Activated CD4-positive, alpha-beta T cell treated with anti-CD3 and anti-CD28 coated beads, Interleukin-2, amount 10 ng/mL, durations not matched to agents 7 days and 5 days (primary cell): ENCODE measurements at regions of chr6 and their contacts with region 1.

Region 1: DNA sequence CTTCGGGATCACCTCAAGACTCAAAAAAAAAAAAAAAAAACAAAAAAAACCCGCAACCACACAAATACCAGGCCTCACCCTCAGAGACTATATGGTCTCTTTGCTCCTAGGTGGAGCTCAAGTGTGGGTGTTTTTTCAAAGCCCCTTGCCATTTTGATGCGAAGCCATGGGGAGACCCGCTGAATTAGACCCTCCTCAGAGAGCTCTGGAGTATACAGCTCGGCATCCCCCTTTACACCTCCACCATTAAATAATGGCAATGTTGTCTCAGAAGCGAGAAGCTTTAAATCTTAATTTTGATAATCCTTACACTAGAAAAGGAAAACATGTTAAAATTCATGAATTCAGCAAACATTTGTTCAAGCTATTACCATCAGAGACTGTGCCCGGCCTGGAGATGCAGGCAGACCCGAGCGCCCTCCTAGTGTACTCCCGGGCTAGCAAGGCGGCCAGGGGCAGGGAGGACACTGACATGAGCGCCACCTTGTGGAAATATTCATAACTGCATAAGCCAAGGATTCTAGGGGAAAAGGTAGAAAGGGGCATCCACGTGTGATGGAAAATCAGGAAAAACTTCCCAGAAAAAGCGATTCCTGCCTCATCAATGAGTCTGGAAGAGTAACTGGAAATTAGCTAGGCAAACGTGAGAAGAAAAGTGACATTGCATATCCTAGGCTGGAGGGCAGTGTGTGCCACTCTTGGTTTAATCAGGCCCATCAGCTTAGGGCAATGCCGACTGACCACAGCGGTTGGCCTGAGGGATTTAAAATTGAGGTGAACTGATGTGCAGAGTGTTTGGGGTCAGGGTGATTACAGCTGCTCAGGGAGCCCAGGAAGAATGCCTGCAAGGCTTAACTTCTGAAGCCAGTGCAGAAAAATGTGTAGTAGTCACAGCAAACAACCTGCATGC is 72.5 kb downstream of the B3GAT2 start:
- DNase-seq: peak; percentile 70
- H3K4me3 Mint-ChIP-seq: no peak overlapping the region
- H3K27ac Mint-ChIP-seq: no peak overlapping the region
- H3K4me1 Mint-ChIP-seq: no peaks in the 10 kb centered on the region
- H3K27me3 Mint-ChIP-seq: peaks cover 4% of the 10 kb centered on the region

Region 2: DNA sequence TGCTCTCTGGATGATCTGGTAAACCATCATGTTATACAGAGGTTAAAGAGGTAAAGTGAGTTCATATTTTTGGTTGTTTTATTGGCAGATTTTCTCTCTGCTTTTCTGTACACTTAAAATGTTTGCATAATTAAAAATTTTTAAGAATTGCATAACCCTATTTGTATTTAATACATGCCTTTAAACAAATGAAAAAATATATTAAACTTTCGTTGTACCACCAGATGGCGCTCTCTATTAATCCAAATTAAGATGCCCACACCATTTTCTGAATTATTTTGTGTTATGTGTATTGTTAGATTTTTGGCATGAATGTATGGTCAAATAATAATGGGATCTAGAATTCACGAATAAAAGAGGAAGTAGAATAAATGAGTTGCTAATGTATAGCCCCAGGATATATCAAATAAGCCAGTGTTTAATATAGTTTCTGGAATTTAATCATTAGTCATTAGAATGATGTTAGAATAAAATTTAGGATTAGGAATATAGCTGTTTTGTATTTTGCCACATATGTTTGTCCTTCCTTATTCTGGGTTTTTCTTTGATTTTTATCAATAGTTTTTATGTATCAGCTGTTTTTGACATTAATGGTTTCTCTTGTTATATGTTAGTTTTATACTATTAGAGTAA is 177.7 kb before region 1 on chr6:
- CTCF ChIA-PET with region 1: interaction called, 14 read pairs
- POLR2A ChIA-PET with region 1: interaction called, 3 read pairs
- DNase-seq: peak; percentile 26
- H3K4me3 Mint-ChIP-seq: no peak overlapping the region
- H3K27ac Mint-ChIP-seq: no peak overlapping the region
- H3K4me1 Mint-ChIP-seq: peaks cover 19% of the 10 kb centered on the region
- H3K27me3 Mint-ChIP-seq: no peaks in the 10 kb centered on the region

Region 3: DNA sequence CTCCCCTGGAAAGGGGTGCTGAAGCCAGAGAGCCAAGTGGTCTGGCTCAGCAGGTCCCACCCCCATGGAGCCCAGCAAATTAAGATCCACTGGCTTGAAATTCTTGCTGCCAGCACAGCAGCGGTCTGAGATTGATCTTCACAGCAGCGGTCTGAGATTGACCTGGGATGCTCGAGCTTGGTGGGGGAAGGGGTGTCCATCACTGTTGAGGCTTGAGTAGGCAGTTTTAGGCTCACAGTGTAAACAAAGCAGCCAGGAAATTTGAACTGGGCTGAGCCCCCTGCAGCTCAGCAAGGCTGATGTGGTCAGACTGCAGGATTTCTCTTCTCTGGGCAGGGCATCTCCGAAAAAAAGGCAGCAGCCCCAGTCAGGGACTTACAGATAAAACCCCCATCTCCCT is 113.8 kb after region 1 on chr6:
- CTCF ChIA-PET with region 1: no interaction called
- POLR2A ChIA-PET with region 1: no interaction called
- DNase-seq: no peak
- H3K4me3 Mint-ChIP-seq: no peak overlapping the region
- H3K27ac Mint-ChIP-seq: no peak overlapping the region
- H3K4me1 Mint-ChIP-seq: no peaks in the 10 kb centered on the region
- H3K27me3 Mint-ChIP-seq: peaks cover 5% of the 10 kb centered on the region